Heart left ventricle (tissue), 16 donors: ENCODE measurements at regions of chr20 and their contacts with region 1.

Region 1: GRCh38 chr20:50467718-50468356 is 42.3 kb upstream of the PTPN1 start:
- DNase-seq: peak in 2 of 5 donors; percentile 43 to 49
- ATAC-seq: peak in 3 of 4 donors; percentile 32 to 59 (median 47)
- H3K4me3 ChIP-seq: no peak overlapping the region
- H3K27ac ChIP-seq: no peak overlapping the region
- H3K4me1 ChIP-seq: peaks cover 0 to 41% (median 2%) of the 10 kb centered on the region in 12 donors
- H3K27me3 ChIP-seq: no peaks in the 10 kb centered on the region
- CTCF ChIP-seq: no peak
- POLR2A ChIP-seq: peak in 1 of 2 donors; percentile 11

Region 2: DNA sequence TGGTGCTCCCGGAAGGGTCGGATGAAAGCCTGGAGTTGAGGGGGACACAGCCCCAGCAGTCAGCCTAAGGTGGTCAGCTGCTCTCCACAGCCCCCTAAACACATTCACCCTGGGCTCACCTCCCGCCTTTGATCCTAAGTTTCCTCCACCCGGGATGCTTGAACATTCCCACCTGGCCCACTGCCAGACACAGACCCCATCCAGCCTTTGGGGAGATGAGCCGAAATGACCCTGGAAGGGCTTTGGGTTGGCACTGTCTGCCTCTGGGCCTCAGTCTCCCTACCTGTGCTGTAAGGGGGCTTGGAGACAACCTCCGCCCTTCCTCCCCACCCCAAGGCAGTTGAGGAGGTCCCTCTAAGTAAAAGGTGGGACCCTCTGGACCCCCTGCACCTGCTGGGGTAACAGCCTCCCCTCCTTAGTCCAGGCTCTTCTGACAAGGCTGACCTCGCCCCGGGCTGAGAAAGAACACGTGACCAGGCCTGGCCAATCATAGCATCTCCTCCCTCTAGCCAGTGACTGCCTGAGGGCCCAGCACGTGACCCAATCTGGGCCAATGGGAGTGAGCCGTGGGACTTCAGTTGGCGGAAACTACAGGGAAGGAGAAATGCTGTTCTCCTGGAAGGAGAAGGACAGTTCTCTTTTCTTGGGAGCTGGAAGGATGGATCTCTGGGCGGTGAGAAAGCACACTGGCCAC is 338.0 kb before region 1 on chr20:
- intact Hi-C with region 1: loop called in 1 of 10 experiments (anchors 5 kb)
- DNase-seq: no peak
- ATAC-seq: no peak
- H3K4me3 ChIP-seq: no peak overlapping the region
- H3K27ac ChIP-seq: peak overlapping the region in 6 of 12 donors; percentile 68 to 85 (median 77)
- H3K4me1 ChIP-seq: peaks cover 0 to 35% (median 19%) of the 10 kb centered on the region in 12 donors
- H3K27me3 ChIP-seq: no peaks in the 10 kb centered on the region
- CTCF ChIP-seq: no peak
- POLR2A ChIP-seq: no peak

Region 3: DNA sequence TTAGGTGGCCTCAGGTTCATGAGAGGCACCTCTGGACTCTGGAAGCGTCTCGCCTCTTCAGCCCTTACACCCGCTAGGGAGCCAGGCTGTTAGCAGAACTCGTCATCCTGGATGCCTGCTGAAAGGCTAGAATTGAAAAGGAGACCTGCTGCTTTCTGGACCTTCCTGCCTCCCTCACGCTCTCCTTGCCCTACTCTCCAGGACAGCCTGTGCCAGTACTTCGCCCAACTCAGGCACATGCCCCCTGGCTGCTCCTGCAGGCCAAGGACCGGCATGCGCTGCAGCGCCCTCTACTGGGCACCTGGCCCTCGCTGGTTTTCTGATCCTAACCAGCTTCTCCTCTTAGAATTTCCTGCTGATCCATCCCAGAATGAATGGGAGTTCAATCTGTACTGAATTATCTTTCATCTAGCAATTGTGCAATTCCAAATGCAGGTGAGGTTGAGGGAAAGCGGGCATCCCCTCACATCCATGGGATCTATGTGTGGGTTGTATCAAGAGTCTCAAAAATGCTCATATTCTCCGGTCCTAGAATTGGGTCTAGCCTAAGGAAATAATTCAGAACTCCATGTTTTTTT is 120.3 kb after region 1 on chr20:
- intact Hi-C with region 1: no loop called
- DNase-seq: peak; percentile 49 to 88 (median 73)
- ATAC-seq: peak in 3 of 4 donors; percentile 42 to 50 (median 42)
- H3K4me3 ChIP-seq: no peak overlapping the region
- H3K27ac ChIP-seq: peak overlapping the region in 1 of 12 donors; percentile 20
- H3K4me1 ChIP-seq: peaks cover 0 to 20% (median 13%) of the 10 kb centered on the region in 12 donors
- H3K27me3 ChIP-seq: no peaks in the 10 kb centered on the region
- CTCF ChIP-seq: peak; percentile 71 to 96 (median 86)
- POLR2A ChIP-seq: no peak